ENCODE measurements at regions of chr2 and their contacts with region 1.

Region 1: GRCh38 chr2:219253753-219254590 is at the start of gene TUBA4A:
- DNase-seq: peak; percentile 67 to 84 (median 82)
- H3K4me3 ChIP-seq: peak within 1 kb of the TSS; percentile 51 to 97 (median 75)
- H3K27ac ChIP-seq: peak within 1 kb of the TSS in 1 of 2 experiments; percentile 58
- H3K4me1 ChIP-seq: peaks cover 10 to 59% (median 56%) of the 10 kb centered on the region in 4 experiments
- H3K27me3 ChIP-seq: peaks cover 0 to 10% (median 0%) of the 10 kb centered on the region in 5 experiments

Region 2: DNA sequence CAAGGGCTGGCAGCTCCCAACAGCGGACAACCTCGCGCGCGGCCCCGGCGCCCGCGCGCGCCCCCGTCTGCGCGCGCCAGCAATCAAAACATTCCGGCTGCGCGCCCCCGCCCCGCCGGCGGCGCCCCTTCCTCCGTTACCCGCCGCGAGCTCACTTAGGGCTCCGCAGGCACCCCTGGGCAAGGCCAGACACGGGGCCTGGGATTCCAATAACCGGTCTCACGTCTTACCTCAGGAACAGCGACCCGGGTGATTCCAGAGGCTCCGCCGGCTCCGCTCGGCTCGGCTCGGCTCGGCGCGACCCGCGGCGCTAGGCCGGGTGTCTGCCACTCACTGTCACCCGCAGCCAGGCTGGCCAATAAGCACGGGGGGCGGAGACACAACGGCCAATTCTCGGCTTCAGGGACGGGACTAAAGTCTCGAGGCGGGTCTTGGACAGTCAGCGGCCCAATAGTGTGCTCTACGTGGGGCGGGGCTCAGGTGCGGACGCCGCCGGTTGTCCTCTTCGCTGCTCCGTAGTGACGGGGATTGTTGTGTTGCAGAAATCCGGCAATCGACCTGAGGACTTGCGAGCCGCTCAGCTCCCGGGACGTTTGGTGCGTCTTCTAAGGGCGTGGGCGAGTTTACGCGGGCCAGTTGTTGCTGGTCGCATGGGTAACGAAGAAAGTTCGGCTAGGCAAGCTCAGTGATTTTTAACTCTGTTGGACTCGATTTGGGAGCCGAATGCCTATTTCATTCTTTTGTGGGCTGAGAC is 24.5 kb before region 1 on chr2 and contains the starts of genes ANKZF1 and ATG9A:
- CTCF ChIA-PET with region 1: interaction called, 15 read pairs
- POLR2A ChIA-PET with region 1: interaction called, 3 read pairs
- DNase-seq: peak; percentile 97 to 99 (median 99)
- H3K4me3 ChIP-seq: peak within 1 kb of the TSS; percentile 60 to 98 (median 91)
- H3K27ac ChIP-seq: peak within 1 kb of the TSS; percentile 85 to 90
- H3K4me1 ChIP-seq: peaks cover 10 to 41% (median 36%) of the 10 kb centered on the region in 4 experiments
- H3K27me3 ChIP-seq: no peaks in the 10 kb centered on the region

Region 3: DNA sequence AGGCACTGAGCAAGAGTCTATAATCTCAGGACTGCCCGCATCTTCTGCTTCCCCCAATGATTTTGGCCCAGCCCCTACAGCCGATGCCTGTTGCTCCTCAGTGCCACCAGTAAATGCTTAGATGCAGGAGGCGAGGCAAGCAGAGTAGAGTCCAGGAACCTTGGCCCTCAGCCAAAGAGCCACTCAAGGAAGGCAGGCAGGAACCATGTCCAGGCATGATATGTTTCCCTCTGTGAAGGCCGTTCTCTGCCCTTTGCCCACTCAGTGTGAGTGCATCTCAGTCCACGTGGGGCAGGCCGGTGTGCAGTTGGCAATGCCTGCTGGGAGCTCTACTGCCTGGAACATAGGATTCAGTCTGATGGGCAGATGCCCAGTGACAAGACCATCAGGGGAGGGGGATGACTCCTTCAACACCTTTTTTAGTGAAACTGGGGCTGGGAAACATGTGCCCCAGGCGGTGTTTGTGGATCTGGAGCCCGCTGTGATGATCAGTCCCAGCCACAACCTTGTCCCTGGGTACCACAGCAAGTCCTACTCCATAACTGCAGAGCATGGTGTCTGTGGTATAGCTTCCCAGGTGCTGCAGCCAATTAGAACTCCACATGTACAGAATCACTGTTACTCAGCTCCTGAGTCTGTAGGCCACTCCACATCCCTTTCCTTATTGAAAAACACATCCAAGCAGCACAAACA is 15.5 kb after region 1 on chr2:
- CTCF ChIA-PET with region 1: interaction called, 81 read pairs
- POLR2A ChIA-PET with region 1: interaction called, 3 read pairs
- DNase-seq: no peak
- H3K4me3 ChIP-seq: no peak overlapping the region
- H3K27ac ChIP-seq: no peak overlapping the region
- H3K4me1 ChIP-seq: no peaks in the 10 kb centered on the region
- H3K27me3 ChIP-seq: peaks cover 0 to 11% (median 0%) of the 10 kb centered on the region in 5 experiments

Region 4: GRCh38 chr2:219278655-219279516 is 24.9 kb after region 1 on chr2 and contains the start of gene DNAJB2:
- CTCF ChIA-PET with region 1: interaction called, 81 read pairs
- POLR2A ChIA-PET with region 1: interaction called, 3 read pairs
- DNase-seq: peak; percentile 98 to 99 (median 99)
- H3K4me3 ChIP-seq: peak within 1 kb of the TSS; percentile 22 to 77 (median 65)
- H3K27ac ChIP-seq: peak within 1 kb of the TSS; percentile 68 to 84
- H3K4me1 ChIP-seq: peaks cover 8 to 32% (median 28%) of the 10 kb centered on the region in 4 experiments
- H3K27me3 ChIP-seq: peaks cover 0 to 3% (median 0%) of the 10 kb centered on the region in 5 experiments

Region 5: GRCh38 chr2:219368690-219369195 is 114.8 kb after region 1 on chr2:
- CTCF ChIA-PET with region 1: no interaction called
- POLR2A ChIA-PET with region 1: no interaction called
- DNase-seq: no peak
- H3K4me3 ChIP-seq: no peak overlapping the region
- H3K27ac ChIP-seq: no peak overlapping the region
- H3K4me1 ChIP-seq: no peaks in the 10 kb centered on the region
- H3K27me3 ChIP-seq: no peaks in the 10 kb centered on the region

Region 6: GRCh38 chr2:219418155-219418569 is 164.2 kb after region 1 on chr2 and contains the start of gene DES:
- CTCF ChIA-PET with region 1: no interaction called
- POLR2A ChIA-PET with region 1: no interaction called
- DNase-seq: no peak
- H3K4me3 ChIP-seq: peak within 1 kb of the TSS in 3 of 7 experiments; percentile 19 to 48 (median 23)
- H3K27ac ChIP-seq: no peak within 1 kb of the TSS
- H3K4me1 ChIP-seq: peaks cover 0 to 9% (median 4%) of the 10 kb centered on the region in 4 experiments
- H3K27me3 ChIP-seq: peaks cover 0 to 66% (median 27%) of the 10 kb centered on the region in 5 experiments

Measured in common myeloid progenitor, CD34-positive (primary cell).